Mucosa of descending colon (tissue), 3 donors: ENCODE measurements at regions of chr18 and their contacts with region 1.

Region 1: DNA sequence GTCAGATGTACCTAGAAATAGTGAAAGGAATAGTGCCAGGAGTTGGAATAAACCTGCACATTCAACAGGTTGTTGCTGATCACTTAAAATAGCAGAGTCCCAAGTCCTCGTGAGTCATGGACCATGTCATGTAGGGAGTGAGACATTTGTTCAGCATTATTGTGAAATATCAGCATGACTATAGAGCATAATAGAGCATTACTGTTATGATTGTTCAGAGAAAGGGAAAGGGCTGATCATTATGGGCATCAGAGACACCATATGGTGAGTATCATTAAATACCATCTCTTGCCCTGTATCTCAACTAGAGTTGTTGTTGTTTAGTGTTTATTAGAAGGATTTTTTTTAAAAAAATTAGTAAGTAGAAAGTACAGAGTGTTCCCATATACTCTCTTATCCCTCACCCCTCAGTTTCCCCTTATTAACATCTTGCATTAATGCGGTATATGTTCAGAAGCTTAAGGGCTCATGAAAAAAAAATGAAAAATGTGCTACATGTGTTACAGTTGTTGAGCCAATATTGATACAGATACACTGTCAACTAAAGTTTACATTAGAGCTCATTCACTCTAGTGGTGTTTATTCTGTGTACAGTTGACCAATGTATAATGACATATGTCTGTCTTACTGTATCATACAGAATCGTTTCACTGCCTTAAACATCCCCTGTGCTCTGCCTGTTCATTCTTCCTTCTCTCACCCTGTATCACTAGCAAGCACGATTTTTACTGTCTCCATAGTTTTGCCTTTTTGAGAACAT is 5.7 kb downstream of the ELAC1 start:
- DNase-seq: peak in 1 of 3 donors; percentile 23
- ATAC-seq: peak; percentile 96
- H3K4me3 ChIP-seq: no peak overlapping the region
- H3K4me1 ChIP-seq: peaks cover 20% of the 10 kb centered on the region
- CTCF ChIP-seq: no peak

Region 2: DNA sequence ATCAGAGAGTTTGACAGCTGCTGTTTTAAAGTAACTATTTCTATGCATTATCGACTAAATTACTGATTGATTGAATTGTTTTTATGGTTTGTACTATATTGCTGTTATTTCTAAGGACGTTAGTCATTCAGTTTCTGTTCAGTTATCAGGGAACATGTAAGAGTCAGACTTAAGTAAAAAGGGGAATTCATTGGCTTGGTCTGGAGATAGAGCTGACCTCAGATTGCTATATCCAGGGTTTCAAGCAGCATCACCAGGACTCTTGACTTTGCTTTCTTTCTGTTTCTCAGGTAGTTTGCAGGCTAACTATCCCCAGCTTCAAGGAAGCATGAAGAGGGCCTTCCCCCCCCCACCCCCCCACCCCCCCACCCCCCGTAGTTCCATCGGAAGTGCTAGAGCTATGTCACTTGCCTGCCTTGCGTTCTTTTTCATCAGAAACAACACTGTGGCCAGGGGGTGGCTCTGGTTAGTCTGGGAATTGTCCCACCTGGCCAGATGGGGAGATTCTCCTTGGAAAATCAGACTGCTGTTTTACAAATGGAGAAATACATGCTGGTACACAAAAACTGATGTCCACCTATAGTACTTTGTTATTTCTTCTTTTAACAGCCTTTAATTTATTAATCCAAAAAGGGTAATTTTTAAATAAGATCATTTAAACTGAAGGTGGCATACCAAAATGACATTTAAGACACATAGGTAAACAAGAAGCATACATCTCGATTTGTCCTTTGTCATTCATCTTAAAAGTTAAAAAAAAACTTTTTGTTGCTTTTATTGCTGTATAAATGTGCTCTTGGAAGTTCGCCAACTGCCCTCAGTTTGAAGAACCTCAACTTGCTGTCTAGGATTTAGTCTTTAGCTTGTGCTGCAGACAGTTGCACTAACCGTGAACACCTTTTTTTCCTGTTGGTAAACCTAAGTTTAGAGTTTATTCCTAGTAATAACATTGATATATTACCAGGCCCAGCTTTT is 65.9 kb after region 1 on chr18:
- intact Hi-C with region 1: loop called in 1 of 2 experiments (anchors 5 kb)
- DNase-seq: no peak
- ATAC-seq: no peak
- H3K4me3 ChIP-seq: no peak overlapping the region
- H3K4me1 ChIP-seq: peaks cover 48% of the 10 kb centered on the region
- CTCF ChIP-seq: no peak